CD4-positive, alpha-beta T cell (primary cell): ENCODE measurements at regions of chr4 and their contacts with region 1.

Region 1: GRCh38 chr4:39697740-39698423 is at the start of gene UBE2K:
- DNase-seq: peak; percentile 78 to 96 (median 86)
- ATAC-seq: peak; percentile 83
- H3K4me3 ChIP-seq: peak within 1 kb of the TSS; percentile 99
- H3K4me3 Mint-ChIP-seq: peak within 1 kb of the TSS; percentile 96
- H3K27ac ChIP-seq: peak within 1 kb of the TSS; percentile 92 to 93
- H3K27ac Mint-ChIP-seq: peak within 1 kb of the TSS; percentile 91
- H3K4me1 ChIP-seq: peaks cover 17% of the 10 kb centered on the region
- H3K4me1 Mint-ChIP-seq: peaks cover 56% of the 10 kb centered on the region
- H3K27me3 ChIP-seq: no peaks in the 10 kb centered on the region
- H3K27me3 Mint-ChIP-seq: no peaks in the 10 kb centered on the region
- CTCF ChIP-seq: no peak
- total RNA-seq, gene UBE2K: 35.9 to 41.3 TPM

Region 2: DNA sequence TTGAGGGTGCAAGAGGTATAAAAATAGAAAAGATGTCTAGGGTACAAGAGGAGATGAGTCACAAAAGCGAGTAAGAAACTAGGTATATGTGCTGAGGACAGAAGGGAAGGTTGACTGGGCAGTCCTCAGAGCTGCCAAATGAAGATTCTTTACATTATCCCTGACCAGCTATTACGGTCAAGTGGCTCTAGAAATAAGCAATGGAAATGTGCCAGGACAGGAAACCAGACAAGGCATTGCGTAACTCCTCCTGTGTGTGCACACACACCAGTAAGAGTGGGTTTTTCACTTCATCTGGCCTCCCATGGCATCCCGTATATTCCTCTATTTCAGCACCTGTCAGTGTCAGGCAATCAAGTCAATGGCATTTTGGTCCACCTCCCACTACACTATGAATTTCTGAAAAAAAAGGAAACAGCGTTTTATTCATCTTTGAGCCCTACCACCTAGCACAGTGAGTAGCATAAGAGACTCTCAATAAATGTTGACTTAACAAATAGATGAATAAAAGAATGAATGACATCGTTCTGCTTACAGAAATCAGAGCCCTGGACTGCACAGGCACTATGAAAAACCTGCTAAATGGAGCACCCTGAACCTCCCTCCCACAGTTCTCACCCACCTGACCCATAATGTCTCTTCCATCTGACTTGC is 1096.5 kb before region 1 on chr4:
- CTCF ChIA-PET with region 1: no interaction called
- POLR2A ChIA-PET with region 1: no interaction called
- intact Hi-C with region 1: no loop called
- DNase-seq: no peak
- ATAC-seq: no peak
- H3K4me3 ChIP-seq: no peak overlapping the region
- H3K4me3 Mint-ChIP-seq: no peak overlapping the region
- H3K27ac ChIP-seq: no peak overlapping the region
- H3K27ac Mint-ChIP-seq: no peak overlapping the region
- H3K4me1 ChIP-seq: peaks cover 12% of the 10 kb centered on the region
- H3K4me1 Mint-ChIP-seq: peaks cover 24% of the 10 kb centered on the region
- H3K27me3 ChIP-seq: no peaks in the 10 kb centered on the region
- H3K27me3 Mint-ChIP-seq: no peaks in the 10 kb centered on the region
- CTCF ChIP-seq: no peak

Region 3: DNA sequence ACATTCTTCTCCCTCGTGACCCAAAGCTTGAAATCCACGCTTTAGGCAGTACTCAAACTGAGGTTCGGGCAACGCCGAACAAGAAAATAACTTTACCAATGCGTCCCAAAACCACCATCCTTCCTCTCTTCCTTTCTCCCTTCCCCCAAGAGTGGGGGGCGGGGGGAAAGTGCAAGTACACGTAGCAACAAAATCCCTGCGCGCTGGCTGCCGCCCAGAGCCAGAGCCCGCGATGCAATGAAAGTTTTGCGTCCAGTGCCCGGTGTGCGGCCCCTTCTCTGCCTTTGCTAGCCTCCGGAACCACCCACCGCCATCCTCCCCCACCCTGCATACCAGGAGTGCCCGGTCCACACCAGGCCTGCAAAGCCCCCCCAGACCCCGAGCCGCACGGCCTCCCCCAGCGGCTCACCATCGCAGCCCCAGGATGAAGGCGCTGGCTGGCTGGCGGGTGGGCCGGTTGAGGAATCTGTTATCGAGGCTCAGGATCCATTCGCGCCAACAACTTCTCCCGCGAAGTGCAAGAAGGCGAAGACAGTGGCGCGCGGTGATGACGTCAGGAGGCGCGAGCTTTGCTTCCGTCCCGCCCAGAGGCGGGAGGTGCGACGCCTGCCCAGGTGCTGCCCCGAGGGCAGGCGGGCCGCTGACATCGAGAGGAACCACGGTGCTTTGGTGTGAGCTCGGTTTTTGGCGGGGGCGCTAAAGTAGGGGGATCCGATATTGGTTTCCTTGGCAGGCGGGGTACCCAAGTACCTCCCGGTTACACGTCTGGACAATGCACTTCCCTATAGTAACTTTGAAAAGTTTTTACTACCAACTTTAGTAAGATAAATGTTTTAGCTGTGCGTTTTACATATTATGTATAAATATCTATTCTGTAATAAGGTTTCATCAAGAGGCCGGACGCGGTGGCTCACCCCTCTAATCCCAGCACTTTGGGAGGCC is 331.8 kb before region 1 on chr4 and contains the start of gene RFC1:
- CTCF ChIA-PET with region 1: no interaction called
- POLR2A ChIA-PET with region 1: no interaction called
- intact Hi-C with region 1: loop called in 1 of 2 experiments (anchors 5 kb)
- DNase-seq: peak; percentile 85 to 97 (median 91)
- ATAC-seq: peak; percentile 95
- H3K4me3 ChIP-seq: peak within 1 kb of the TSS; percentile 98
- H3K4me3 Mint-ChIP-seq: peak within 1 kb of the TSS; percentile 93
- H3K27ac ChIP-seq: peak within 1 kb of the TSS; percentile 49 to 81
- H3K27ac Mint-ChIP-seq: peak within 1 kb of the TSS; percentile 91
- H3K4me1 ChIP-seq: peaks cover 30% of the 10 kb centered on the region
- H3K4me1 Mint-ChIP-seq: peaks cover 37% of the 10 kb centered on the region
- H3K27me3 ChIP-seq: no peaks in the 10 kb centered on the region
- H3K27me3 Mint-ChIP-seq: no peaks in the 10 kb centered on the region
- CTCF ChIP-seq: no peak
- total RNA-seq, gene RFC1: 97.0 to 104 TPM

Region 4: GRCh38 chr4:39527273-39528060 is 170.4 kb before region 1 on chr4 and contains the start of gene UGDH:
- CTCF ChIA-PET with region 1: interaction called, 3 read pairs
- POLR2A ChIA-PET with region 1: interaction called, 18 read pairs
- intact Hi-C with region 1: loop called in 1 of 2 experiments (anchors 5 kb)
- DNase-seq: peak; percentile 73 to 96 (median 89)
- ATAC-seq: peak; percentile 98
- H3K4me3 ChIP-seq: peak within 1 kb of the TSS; percentile 98
- H3K4me3 Mint-ChIP-seq: peak within 1 kb of the TSS; percentile 98
- H3K27ac ChIP-seq: peak within 1 kb of the TSS; percentile 52 to 65
- H3K27ac Mint-ChIP-seq: peak within 1 kb of the TSS; percentile 88
- H3K4me1 ChIP-seq: peaks cover 22% of the 10 kb centered on the region
- H3K4me1 Mint-ChIP-seq: peaks cover 22% of the 10 kb centered on the region
- H3K27me3 ChIP-seq: no peaks in the 10 kb centered on the region
- H3K27me3 Mint-ChIP-seq: no peaks in the 10 kb centered on the region
- CTCF ChIP-seq: no peak
- total RNA-seq, gene UGDH: 3.5 to 3.7 TPM

Region 5: GRCh38 chr4:39621582-39621981 is 76.3 kb before region 1 on chr4:
- CTCF ChIA-PET with region 1: no interaction called
- POLR2A ChIA-PET with region 1: no interaction called
- intact Hi-C with region 1: no loop called
- DNase-seq: no peak
- ATAC-seq: no peak
- H3K4me3 ChIP-seq: no peak overlapping the region
- H3K4me3 Mint-ChIP-seq: no peak overlapping the region
- H3K27ac ChIP-seq: no peak overlapping the region
- H3K27ac Mint-ChIP-seq: no peak overlapping the region
- H3K4me1 ChIP-seq: no peaks in the 10 kb centered on the region
- H3K4me1 Mint-ChIP-seq: peaks cover 10% of the 10 kb centered on the region
- H3K27me3 ChIP-seq: no peaks in the 10 kb centered on the region
- H3K27me3 Mint-ChIP-seq: no peaks in the 10 kb centered on the region
- CTCF ChIP-seq: no peak

Region 6: DNA sequence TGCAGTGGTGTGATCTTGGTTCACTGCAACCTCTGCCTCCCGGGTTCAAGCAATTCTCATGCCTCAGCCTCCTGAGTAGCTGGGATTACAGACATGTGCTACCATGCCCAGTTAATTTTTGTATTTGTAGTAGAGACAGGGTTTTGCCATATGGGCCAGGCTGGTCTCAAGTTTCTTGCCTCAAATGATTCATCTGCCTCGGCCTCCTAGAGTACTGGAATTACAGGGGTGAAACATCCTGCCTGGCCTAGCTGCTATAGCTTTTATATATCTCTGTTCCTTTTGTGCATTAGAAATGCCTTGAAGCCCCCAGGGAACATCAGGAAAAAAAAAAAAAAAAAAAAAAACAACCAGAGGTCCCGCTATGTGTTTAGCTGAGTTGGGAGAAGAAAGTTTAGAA is 34.8 kb after region 1 on chr4:
- CTCF ChIA-PET with region 1: no interaction called
- POLR2A ChIA-PET with region 1: interaction called, 5 read pairs
- intact Hi-C with region 1: loop called in 1 of 2 experiments (anchors 5 kb)
- DNase-seq: no peak
- ATAC-seq: no peak
- H3K4me3 ChIP-seq: no peak overlapping the region
- H3K4me3 Mint-ChIP-seq: no peak overlapping the region
- H3K27ac ChIP-seq: no peak overlapping the region
- H3K27ac Mint-ChIP-seq: no peak overlapping the region
- H3K4me1 ChIP-seq: peaks cover 3% of the 10 kb centered on the region
- H3K4me1 Mint-ChIP-seq: peaks cover 30% of the 10 kb centered on the region
- H3K27me3 ChIP-seq: no peaks in the 10 kb centered on the region
- H3K27me3 Mint-ChIP-seq: no peaks in the 10 kb centered on the region
- CTCF ChIP-seq: no peak

Region 7: DNA sequence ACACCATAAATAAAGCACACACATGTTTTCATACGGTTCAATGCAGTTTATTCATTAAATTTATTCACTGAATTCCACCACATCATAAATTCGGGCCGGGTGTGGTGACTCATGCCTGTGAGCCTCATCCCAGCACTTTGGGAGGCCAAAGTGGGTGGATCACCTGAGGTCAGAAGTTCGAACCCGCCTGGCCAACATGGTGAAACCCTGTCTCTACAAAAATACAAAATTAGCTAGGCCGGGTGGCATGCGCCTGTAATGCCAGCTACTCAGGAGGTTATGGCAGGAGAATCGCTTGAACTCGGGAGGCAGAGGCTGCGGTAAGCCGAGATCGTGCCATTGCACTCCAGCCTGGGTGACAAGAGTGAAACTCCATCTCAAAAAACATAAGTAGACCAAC is 148.2 kb after region 1 on chr4:
- CTCF ChIA-PET with region 1: no interaction called
- POLR2A ChIA-PET with region 1: no interaction called
- intact Hi-C with region 1: loop called in 1 of 2 experiments (anchors 10 kb)
- DNase-seq: no peak
- ATAC-seq: no peak
- H3K4me3 ChIP-seq: no peak overlapping the region
- H3K4me3 Mint-ChIP-seq: no peak overlapping the region
- H3K27ac ChIP-seq: no peak overlapping the region
- H3K27ac Mint-ChIP-seq: no peak overlapping the region
- H3K4me1 ChIP-seq: no peaks in the 10 kb centered on the region
- H3K4me1 Mint-ChIP-seq: no peaks in the 10 kb centered on the region
- H3K27me3 ChIP-seq: no peaks in the 10 kb centered on the region
- H3K27me3 Mint-ChIP-seq: no peaks in the 10 kb centered on the region
- CTCF ChIP-seq: no peak

Region 8: DNA sequence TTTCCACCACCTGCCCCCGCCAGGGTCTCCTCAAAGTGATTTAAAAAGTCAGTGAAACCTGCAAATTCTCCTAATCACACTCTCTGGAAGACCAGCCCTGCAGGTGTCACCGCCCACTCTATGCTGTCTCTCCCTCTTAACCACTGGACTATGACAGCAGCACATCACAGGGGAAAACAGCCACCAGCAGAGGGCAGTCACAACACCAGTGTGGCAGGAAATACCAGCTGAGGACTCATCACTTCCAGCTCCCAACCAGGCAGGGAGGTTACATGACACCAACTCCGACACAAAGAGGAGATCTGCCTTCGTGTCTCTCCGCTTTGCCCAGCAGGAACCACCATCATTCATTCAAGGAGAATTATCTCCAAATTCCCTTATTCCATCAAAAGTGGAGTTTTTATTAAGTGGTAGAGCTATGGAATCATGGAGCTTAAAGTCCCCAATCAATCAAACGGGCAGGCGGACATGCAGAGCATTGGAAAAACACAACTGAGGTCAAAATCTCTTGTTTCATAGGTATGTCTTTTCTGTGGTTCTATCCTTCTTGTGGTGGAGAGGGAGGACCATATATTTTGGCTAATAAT is 1143.2 kb after region 1 on chr4:
- CTCF ChIA-PET with region 1: no interaction called
- POLR2A ChIA-PET with region 1: no interaction called
- intact Hi-C with region 1: loop called in 1 of 2 experiments (anchors 10 kb)
- DNase-seq: peak; percentile 44 to 74 (median 56)
- ATAC-seq: peak; percentile 72
- H3K4me3 ChIP-seq: no peak overlapping the region
- H3K4me3 Mint-ChIP-seq: no peak overlapping the region
- H3K27ac ChIP-seq: no peak overlapping the region
- H3K27ac Mint-ChIP-seq: no peak overlapping the region
- H3K4me1 ChIP-seq: no peaks in the 10 kb centered on the region
- H3K4me1 Mint-ChIP-seq: no peaks in the 10 kb centered on the region
- H3K27me3 ChIP-seq: no peaks in the 10 kb centered on the region
- H3K27me3 Mint-ChIP-seq: no peaks in the 10 kb centered on the region
- CTCF ChIP-seq: peak; percentile 62